Right ventricle myocardium superior (tissue), 1 donor: ENCODE measurements at regions of chr17 and their contacts with region 1.

Region 1: DNA sequence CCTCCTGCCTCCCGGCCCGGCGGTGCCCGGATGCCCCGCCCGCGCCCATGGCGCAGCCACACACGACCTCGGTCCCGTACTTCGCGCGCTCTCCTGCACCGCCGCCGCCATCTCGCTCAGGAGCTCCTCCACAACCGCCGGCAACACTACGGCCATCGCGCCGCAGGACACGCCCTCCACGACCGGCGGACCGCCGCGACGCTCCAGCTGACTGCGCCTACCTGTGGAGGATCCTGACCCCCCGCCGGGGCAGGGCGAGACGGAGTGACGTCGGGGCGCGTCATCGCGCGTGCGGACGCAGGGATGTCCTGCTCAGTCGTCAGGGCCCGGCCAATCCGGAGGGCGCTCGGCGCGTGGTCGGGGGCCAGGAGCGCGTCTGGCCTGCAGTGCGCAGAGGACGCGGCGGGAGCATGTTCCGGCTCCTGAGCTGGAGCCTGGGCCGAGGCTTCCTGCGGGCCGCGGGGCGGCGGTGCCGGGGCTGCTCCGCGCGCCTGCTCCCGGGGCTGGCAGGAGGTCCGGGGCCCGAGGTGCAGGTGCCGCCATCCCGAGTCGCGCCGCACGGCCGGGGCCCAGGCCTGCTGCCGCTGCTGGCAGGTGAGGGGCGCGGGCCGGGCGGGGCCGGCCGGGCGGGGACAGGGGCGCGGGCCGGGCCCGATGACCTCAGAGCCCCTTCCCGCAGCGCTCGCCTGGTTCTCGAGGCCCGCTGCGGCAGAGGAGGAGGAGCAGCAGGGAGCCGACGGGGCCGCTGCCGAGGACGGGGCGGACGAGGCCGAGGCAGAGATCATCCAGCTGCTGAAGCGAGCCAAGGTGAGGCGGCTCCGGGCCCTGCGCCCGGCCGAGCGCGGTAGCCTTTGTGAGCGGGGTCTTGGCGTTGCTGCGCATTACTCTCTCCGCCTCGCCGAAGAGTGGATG is at the starts of genes TTC19 and ZSWIM7:
- DNase-seq: peak; percentile 98
- ATAC-seq: peak; percentile 98
- total RNA-seq, gene TTC19: 19.0 TPM
- total RNA-seq, gene ZSWIM7: 21.0 TPM

Region 2: DNA sequence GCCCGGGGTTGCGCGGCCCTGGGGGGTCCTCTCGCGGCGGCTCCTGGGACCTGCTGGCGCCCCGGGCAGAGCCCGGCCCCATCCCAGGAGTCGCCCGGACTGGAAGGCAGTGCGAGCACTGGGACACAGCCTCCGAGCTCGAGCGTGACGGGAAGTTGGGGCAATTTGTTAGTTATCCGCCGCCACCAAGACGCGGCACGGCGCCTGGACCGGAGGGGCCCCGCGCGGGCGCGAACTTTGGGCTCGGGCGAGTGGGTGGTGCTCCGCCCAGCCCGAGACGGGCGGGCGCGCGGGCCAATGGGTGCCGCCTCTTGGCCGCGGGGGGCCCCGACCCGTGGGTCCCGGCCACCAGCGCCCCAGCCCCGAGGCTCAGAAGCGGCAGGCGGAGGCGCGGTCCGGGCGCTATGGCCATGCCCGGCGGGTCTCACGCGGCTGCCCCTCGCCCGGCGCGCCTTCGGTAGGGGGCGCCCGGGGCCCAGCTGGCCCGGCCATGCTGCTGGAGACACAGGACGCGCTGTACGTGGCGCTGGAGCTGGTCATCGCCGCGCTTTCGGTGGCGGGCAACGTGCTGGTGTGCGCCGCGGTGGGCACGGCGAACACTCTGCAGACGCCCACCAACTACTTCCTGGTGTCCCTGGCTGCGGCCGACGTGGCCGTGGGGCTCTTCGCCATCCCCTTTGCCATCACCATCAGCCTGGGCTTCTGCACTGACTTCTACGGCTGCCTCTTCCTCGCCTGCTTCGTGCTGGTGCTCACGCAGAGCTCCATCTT is 54.8 kb before region 1 on chr17 and contains the start of gene ADORA2B:
- intact Hi-C with region 1: loop called (anchors 10 kb)
- DNase-seq: peak; percentile 79
- ATAC-seq: peak; percentile 87
- total RNA-seq, gene ADORA2B: 0.46 TPM